Breast epithelium (tissue), 4 donors: ENCODE measurements at regions of chr1 and their contacts with region 1.

Region 1: GRCh38 chr1:230270559-230271281 is 155.4 kb downstream of the PGBD5 start:
- DNase-seq: peak in 1 of 2 donors; percentile 42
- H3K4me3 ChIP-seq: no peak overlapping the region
- H3K27ac ChIP-seq: peak overlapping the region in 1 of 2 donors; percentile 68
- H3K4me1 ChIP-seq: no peaks in the 10 kb centered on the region
- H3K27me3 ChIP-seq: no peaks in the 10 kb centered on the region
- CTCF ChIP-seq: no peak
- POLR2A ChIP-seq: no peak

Region 2: GRCh38 chr1:229529639-229530038 is 741.1 kb before region 1 on chr1:
- intact Hi-C with region 1: no loop called
- DNase-seq: no peak
- H3K4me3 ChIP-seq: no peak overlapping the region
- H3K27ac ChIP-seq: no peak overlapping the region
- H3K4me1 ChIP-seq: no peaks in the 10 kb centered on the region
- H3K27me3 ChIP-seq: no peaks in the 10 kb centered on the region
- CTCF ChIP-seq: no peak
- POLR2A ChIP-seq: no peak

Region 3: DNA sequence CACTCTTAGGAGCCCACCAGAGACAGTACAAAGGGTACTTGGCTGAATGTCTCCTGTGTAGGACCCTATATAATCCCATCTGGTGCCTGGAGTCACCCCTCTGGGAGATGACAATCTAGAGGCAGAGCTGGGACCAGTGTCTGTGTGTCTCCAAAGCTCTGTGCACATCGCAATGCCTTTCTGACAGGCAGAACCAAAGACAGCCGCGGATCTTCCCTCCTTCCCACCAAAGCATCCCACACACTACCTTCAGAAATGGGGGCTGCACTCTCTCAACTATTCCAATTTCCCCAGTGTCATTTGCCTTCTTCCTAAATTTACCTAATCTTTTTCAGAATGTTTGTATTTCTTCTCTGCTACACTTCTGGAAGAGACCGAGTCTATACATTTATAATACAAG is 143.4 kb after region 1 on chr1:
- intact Hi-C with region 1: loop called (anchors 5 kb)
- DNase-seq: no peak
- H3K4me3 ChIP-seq: no peak overlapping the region
- H3K27ac ChIP-seq: no peak overlapping the region
- H3K4me1 ChIP-seq: no peaks in the 10 kb centered on the region
- H3K27me3 ChIP-seq: peaks cover 0 to 29% of the 10 kb centered on the region in 2 donors
- CTCF ChIP-seq: no peak
- POLR2A ChIP-seq: no peak

Region 4: GRCh38 chr1:230661976-230662375 is 391.3 kb after region 1 on chr1:
- intact Hi-C with region 1: no loop called
- DNase-seq: no peak
- H3K4me3 ChIP-seq: no peak overlapping the region
- H3K27ac ChIP-seq: no peak overlapping the region
- H3K4me1 ChIP-seq: no peaks in the 10 kb centered on the region
- H3K27me3 ChIP-seq: no peaks in the 10 kb centered on the region
- CTCF ChIP-seq: no peak
- POLR2A ChIP-seq: no peak